Breast epithelium (tissue), 4 donors: ENCODE measurements at regions of chr5 and their contacts with region 1.

Region 1: GRCh38 chr5:68315679-68316271 is 100.2 kb downstream of the PIK3R1 start:
- DNase-seq: no peak
- H3K4me3 ChIP-seq: no peak overlapping the region
- H3K27ac ChIP-seq: no peak overlapping the region
- H3K4me1 ChIP-seq: no peaks in the 10 kb centered on the region
- H3K27me3 ChIP-seq: no peaks in the 10 kb centered on the region
- CTCF ChIP-seq: no peak
- POLR2A ChIP-seq: no peak

Region 2: DNA sequence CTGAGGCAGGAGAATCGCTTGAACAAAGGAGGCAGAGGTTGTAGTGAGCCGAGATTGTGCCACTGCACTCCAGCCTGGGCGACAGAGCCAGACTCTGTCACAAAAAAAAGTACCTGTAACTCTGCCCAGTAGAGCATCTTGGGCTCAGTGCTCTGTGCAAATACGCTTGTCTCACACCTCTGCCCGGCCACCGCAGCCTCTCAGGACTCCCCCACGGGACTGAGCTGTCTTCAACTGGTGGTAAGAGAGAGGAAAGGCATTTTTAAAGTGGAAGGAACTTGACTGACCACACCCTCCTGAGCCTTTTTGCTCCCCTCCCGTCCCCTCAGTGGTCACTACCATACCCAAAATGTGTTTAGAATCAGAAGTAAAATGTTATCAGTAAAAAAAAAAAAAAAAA is 274.5 kb before region 1 on chr5:
- intact Hi-C with region 1: no loop called
- DNase-seq: no peak
- H3K4me3 ChIP-seq: no peak overlapping the region
- H3K27ac ChIP-seq: no peak overlapping the region
- H3K4me1 ChIP-seq: no peaks in the 10 kb centered on the region
- H3K27me3 ChIP-seq: no peaks in the 10 kb centered on the region
- CTCF ChIP-seq: no peak
- POLR2A ChIP-seq: no peak

Region 3: GRCh38 chr5:68337235-68337634 is 21.5 kb after region 1 on chr5:
- intact Hi-C with region 1: loop called (anchors 1 kb)
- DNase-seq: no peak
- H3K4me3 ChIP-seq: no peak overlapping the region
- H3K27ac ChIP-seq: no peak overlapping the region
- H3K4me1 ChIP-seq: no peaks in the 10 kb centered on the region
- H3K27me3 ChIP-seq: no peaks in the 10 kb centered on the region
- CTCF ChIP-seq: no peak
- POLR2A ChIP-seq: no peak

Region 4: GRCh38 chr5:68396722-68397121 is 80.9 kb after region 1 on chr5:
- intact Hi-C with region 1: no loop called
- DNase-seq: no peak
- H3K4me3 ChIP-seq: no peak overlapping the region
- H3K27ac ChIP-seq: peak overlapping the region; percentile 76 to 86
- H3K4me1 ChIP-seq: peaks cover 0 to 10% of the 10 kb centered on the region in 2 donors
- H3K27me3 ChIP-seq: no peaks in the 10 kb centered on the region
- CTCF ChIP-seq: no peak
- POLR2A ChIP-seq: no peak